Sigmoid colon (tissue), 7 donors: ENCODE measurements at regions of chr14 and their contacts with region 1.

Region 1: DNA sequence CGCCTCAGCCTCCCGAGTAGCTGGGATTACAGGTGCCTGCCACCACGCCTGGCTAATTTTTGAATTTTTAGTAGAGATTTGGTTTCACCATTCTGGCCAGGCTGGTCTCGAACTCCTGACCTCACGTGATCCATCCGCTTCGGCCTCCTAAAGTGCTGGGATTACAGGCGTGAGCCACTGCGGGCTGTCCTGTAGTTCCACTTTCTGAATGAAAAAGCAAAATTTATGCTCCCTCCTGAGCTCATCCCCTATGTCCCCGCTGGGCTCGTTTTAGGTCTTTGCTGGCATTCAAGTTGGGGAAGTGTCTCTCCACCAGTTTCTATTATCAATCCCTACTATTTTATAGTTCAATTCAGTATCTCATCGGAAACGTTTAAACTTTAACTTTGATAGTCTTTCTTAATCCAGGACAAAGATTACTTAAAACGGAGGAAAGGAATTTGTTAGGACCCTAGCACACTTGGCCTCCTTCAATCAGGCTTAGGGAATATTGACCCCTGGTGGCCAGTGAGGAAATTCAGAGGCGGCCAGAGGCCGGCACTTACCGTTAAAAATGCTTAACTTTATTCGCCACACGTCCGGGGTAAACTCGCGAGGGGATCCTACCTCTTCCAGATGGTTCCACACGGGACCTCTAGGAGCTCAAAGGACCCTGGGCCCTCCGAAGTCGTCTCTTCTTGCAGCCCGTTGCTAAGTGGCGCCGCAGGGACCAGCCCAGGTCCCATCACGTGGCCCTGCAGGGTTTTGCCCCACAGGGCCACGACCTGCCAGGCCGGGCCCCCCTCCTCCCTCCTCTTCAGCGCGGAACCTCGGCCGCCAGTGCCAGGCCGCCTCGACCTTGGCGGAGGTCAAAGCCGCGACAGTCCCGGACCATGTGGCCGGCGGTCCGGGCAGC is 11.4 kb upstream of the DNAL1 start:
- DNase-seq: peak; percentile 79
- H3K4me3 ChIP-seq: peak overlapping the region; percentile 33 to 62 (median 52)
- H3K27ac ChIP-seq: peak overlapping the region; percentile 33 to 70 (median 59)
- H3K4me1 ChIP-seq: peaks cover 0 to 16% (median 6%) of the 10 kb centered on the region in 4 donors
- H3K27me3 ChIP-seq: no peaks in the 10 kb centered on the region
- CTCF ChIP-seq: peak; percentile 78 to 87 (median 84)
- EP300 ChIP-seq: no peak
- POLR2A ChIP-seq: no peak

Region 2: GRCh38 chr14:73295198-73295796 is 338.1 kb before region 1 on chr14:
- intact Hi-C with region 1: loop called (anchors 10 kb)
- DNase-seq: no peak
- H3K4me3 ChIP-seq: no peak overlapping the region
- H3K27ac ChIP-seq: no peak overlapping the region
- H3K4me1 ChIP-seq: no peaks in the 10 kb centered on the region
- H3K27me3 ChIP-seq: no peaks in the 10 kb centered on the region
- CTCF ChIP-seq: peak; percentile 49 to 68 (median 64)
- EP300 ChIP-seq: no peak
- POLR2A ChIP-seq: no peak